ENCODE measurements at regions of chr15 and their contacts with region 1.

Region 1: GRCh38 chr15:57146506-57147201 is 228.2 kb downstream of the TCF12 start:
- DNase-seq: no peak
- H3K4me3 ChIP-seq: peak overlapping the region in 2 of 4 donors; percentile 14 to 23
- H3K27ac ChIP-seq: peak overlapping the region in 3 of 4 donors; percentile 12 to 50 (median 33)
- H3K4me1 ChIP-seq: peaks cover 0 to 45% (median 36%) of the 10 kb centered on the region in 4 donors
- H3K27me3 ChIP-seq: no peaks in the 10 kb centered on the region
- CTCF ChIP-seq: peak in 3 of 4 experiments; percentile 54 to 68 (median 55)
- EP300 ChIP-seq: no peak
- POLR2A ChIP-seq: no peak

Region 2: DNA sequence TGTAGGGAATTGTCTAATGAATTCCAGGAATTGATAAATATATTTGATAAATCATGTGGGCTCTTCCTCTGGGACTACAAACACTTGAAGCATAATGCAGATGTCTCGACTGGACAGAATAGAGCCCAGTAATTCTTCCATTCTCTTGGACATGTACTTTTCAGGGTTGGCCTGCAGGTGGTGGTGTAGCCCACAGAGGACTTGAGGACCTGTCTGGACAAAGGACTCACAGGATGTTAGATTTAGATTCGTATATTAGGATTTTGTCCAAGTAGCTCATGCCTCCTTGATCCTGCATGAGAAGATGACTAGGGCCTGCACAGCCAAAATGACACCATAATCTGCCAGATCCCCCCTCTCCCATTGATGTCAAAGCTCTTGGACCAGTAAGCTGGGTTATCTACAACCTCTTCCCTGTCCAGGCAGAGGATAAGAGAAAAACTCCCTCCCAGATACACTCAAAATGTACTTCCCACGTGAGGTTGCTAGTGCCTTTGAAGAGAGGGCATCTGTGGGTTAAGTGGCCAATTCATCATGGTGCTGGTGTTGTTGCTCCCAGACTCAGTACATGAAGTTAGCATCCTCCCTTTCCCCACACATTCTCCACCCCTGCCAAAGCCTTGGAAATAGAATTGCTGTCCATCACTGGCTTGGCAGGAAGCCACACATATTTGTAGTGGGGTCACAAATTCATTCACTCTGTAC is 324.8 kb before region 1 on chr15:
- intact Hi-C with region 1: loop called (anchors 10 kb)
- DNase-seq: peak; percentile 74
- H3K4me3 ChIP-seq: no peak overlapping the region
- H3K27ac ChIP-seq: no peak overlapping the region
- H3K4me1 ChIP-seq: peaks cover 0 to 9% (median 2%) of the 10 kb centered on the region in 4 donors
- H3K27me3 ChIP-seq: no peaks in the 10 kb centered on the region
- CTCF ChIP-seq: peak; percentile 42 to 70 (median 56)
- EP300 ChIP-seq: no peak
- POLR2A ChIP-seq: no peak

Region 3: GRCh38 chr15:56918046-56918938 is 228.4 kb before region 1 on chr15 and contains the start of gene TCF12:
- intact Hi-C with region 1: loop called (anchors 5 kb)
- DNase-seq: peak; percentile 97
- H3K4me3 ChIP-seq: peak within 1 kb of the TSS; percentile 94 to 99 (median 98)
- H3K27ac ChIP-seq: peak within 1 kb of the TSS; percentile 97 to 100 (median 98)
- H3K4me1 ChIP-seq: peaks cover 0 to 48% (median 25%) of the 10 kb centered on the region in 4 donors
- H3K27me3 ChIP-seq: no peaks in the 10 kb centered on the region
- CTCF ChIP-seq: peak in 3 of 4 experiments; percentile 13 to 38 (median 18)
- EP300 ChIP-seq: peak in 2 of 4 donors; percentile 34 to 38
- POLR2A ChIP-seq: peak; percentile 20 to 65
- total RNA-seq, gene TCF12: 77.8 to 147 (median 119) TPM

Region 4: DNA sequence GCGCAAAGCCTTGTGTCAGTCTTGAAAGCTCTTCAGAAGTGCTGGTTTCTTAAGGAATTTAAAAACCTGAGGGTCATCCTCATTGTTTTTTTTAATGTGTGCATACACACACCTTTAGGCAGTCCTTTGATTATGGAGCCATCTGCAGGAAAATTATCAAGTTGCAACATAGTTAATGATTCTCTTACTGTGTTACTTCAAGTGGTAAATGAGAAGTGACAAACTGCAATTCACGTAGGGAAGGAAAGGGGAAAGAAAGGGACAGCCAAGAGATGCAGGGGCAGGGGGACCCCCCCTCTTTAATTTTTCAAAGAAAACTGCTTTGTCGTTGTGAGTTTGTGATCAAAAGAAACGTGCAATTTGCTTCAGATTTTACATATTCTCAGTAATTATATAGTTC is 67.2 kb after region 1 on chr15:
- intact Hi-C with region 1: loop called (anchors 2 kb)
- DNase-seq: no peak
- H3K4me3 ChIP-seq: no peak overlapping the region
- H3K27ac ChIP-seq: no peak overlapping the region
- H3K4me1 ChIP-seq: peaks cover 0 to 58% (median 31%) of the 10 kb centered on the region in 4 donors
- H3K27me3 ChIP-seq: no peaks in the 10 kb centered on the region
- CTCF ChIP-seq: peak in 3 of 4 experiments; percentile 32 to 47 (median 46)
- EP300 ChIP-seq: no peak
- POLR2A ChIP-seq: no peak

Region 5: GRCh38 chr15:57306161-57306943 is 159.7 kb after region 1 on chr15:
- intact Hi-C with region 1: loop called (anchors 2 kb)
- DNase-seq: peak; percentile 89
- H3K4me3 ChIP-seq: peak overlapping the region; percentile 30 to 58 (median 51)
- H3K27ac ChIP-seq: peak overlapping the region in 2 of 4 donors; percentile 12 to 27
- H3K4me1 ChIP-seq: peaks cover 0 to 16% (median 14%) of the 10 kb centered on the region in 4 donors
- H3K27me3 ChIP-seq: no peaks in the 10 kb centered on the region
- CTCF ChIP-seq: peak; percentile 68 to 86 (median 78)
- EP300 ChIP-seq: no peak
- POLR2A ChIP-seq: no peak

Measured in sigmoid colon (tissue), 7 donors.